ENCODE measurements at regions of chr3 and their contacts with region 1.

Region 1: DNA sequence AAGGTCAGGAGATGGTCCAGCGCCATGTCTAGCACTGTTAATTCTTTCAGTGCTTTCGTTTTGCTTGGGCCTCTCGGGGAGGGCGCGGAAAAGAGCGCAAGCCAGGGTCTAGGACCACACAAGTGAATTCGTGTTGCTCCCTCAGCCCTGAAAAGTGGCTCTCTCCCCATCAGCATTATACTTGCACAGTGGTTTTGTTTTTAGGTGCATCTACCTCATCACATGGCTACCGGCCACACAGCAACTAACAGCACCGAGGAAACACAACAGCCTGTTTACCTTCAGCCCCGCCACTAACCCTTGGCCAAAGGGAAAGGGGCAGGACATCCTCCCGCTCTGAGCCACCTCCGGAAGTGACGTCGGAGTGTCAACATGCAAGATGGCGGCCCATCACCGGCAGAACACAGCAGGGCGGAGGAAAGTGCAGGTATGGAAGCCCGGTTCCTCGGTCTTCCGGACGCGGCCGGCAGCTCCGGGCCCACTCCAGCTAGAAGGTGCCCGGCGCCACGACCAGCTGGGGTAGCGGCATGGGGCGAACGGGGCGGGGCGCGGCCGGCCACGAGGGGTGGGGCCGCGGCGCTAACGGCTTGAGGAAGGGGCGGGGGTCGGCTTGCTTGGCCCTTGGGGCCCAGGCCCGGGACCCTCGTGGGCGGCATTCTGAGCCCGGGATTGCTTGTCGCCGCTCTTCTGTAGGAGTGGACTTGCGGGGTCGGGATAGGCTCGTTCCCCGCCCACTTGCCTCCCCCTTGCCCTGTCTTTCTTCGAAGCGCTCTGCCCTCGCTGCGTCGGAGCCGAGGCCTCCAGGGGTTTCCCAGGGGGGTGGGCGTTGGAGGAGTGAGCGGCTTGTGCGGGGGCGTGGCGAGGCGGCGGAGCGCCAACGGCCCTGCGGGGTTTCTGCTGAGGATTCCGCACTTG is at the starts of genes SCN11A and WDR48:
- DNase-seq: peak; percentile 89 to 98
- ATAC-seq: peak; percentile 88 to 95 (median 90)
- H3K4me3 ChIP-seq: peak within 1 kb of the TSS; percentile 91
- H3K4me3 Mint-ChIP-seq: peak within 1 kb of the TSS; percentile 97
- H3K27ac ChIP-seq: peak within 1 kb of the TSS; percentile 93
- H3K27ac Mint-ChIP-seq: peak within 1 kb of the TSS; percentile 98 to 99
- H3K4me1 ChIP-seq: peaks cover 15% of the 10 kb centered on the region
- H3K4me1 Mint-ChIP-seq: peaks cover 23 to 39% of the 10 kb centered on the region in 2 donors
- H3K27me3 ChIP-seq: no peaks in the 10 kb centered on the region
- H3K27me3 Mint-ChIP-seq: no peaks in the 10 kb centered on the region
- CTCF ChIP-seq: no peak
- total RNA-seq, gene SCN11A: 0.07 to 0.08 TPM in 2 of 3 donors, not detected in the other
- total RNA-seq, gene WDR48: 89.1 to 101 (median 91.5) TPM

Region 2: GRCh38 chr3:39383045-39383880 is 331.4 kb after region 1 on chr3 and contains the start of gene SLC25A38:
- intact Hi-C with region 1: loop called (anchors 5 kb)
- DNase-seq: peak; percentile 74 to 92
- ATAC-seq: peak; percentile 76 to 89 (median 79)
- H3K4me3 ChIP-seq: peak within 1 kb of the TSS; percentile 94
- H3K4me3 Mint-ChIP-seq: peak within 1 kb of the TSS; percentile 98
- H3K27ac ChIP-seq: peak within 1 kb of the TSS; percentile 97
- H3K27ac Mint-ChIP-seq: peak within 1 kb of the TSS; percentile 99
- H3K4me1 ChIP-seq: peaks cover 49% of the 10 kb centered on the region
- H3K4me1 Mint-ChIP-seq: peaks cover 41 to 45% of the 10 kb centered on the region in 2 donors
- H3K27me3 ChIP-seq: no peaks in the 10 kb centered on the region
- H3K27me3 Mint-ChIP-seq: no peaks in the 10 kb centered on the region
- CTCF ChIP-seq: no peak
- total RNA-seq, gene SLC25A38: 40.0 to 44.7 (median 41.7) TPM

Region 3: DNA sequence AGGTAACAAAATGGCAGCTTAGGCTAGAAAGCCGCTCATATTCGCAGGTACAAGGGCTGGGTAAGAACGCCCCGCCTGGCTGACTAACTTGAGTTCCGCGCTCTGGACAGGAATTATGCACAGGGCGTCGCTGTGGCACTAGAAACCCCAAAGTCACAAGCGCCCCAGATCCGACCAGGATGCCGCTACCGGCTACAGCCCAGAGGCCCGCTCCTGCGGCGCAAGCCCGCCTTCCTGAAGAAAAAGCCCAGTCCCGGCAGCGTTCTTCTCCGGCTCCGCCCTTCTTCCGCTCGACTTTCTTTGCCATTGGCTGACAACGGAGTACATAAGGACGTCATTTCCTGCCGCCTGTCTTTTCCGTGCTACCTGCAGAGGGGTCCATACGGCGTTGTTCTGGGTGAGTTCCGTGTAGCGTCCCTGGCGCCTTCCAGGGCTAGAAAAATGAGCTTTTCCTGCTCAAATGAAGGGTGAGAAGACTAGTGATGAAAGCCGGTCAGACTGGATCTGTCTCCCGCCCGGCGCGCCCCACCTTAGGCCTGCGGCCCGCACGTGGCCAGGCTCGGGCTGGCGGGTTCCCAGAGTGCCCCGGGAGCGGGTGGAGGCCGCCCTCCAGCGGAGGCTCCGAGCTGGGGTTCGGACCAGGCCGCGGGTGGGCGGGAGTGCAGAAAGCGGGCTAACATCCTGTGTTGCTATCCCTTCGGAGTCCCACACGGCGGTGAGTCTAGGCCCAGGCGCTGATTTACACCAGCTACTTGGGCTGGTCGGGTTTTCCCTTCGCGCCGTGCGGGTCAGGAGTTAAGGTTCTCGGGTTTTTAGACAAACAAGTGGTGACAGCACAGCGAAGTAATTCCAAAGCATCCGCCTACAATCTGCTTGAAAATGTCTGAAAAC is 354.7 kb after region 1 on chr3 and contains the start of gene RPSA:
- intact Hi-C with region 1: loop called (anchors 5 kb)
- DNase-seq: peak; percentile 86 to 98
- ATAC-seq: peak; percentile 87 to 96 (median 91)
- H3K4me3 ChIP-seq: peak within 1 kb of the TSS; percentile 55
- H3K4me3 Mint-ChIP-seq: peak within 1 kb of the TSS; percentile 96
- H3K27ac ChIP-seq: peak within 1 kb of the TSS; percentile 71
- H3K27ac Mint-ChIP-seq: peak within 1 kb of the TSS; percentile 96 to 98
- H3K4me1 ChIP-seq: peaks cover 19% of the 10 kb centered on the region
- H3K4me1 Mint-ChIP-seq: peaks cover 40 to 43% of the 10 kb centered on the region in 2 donors
- H3K27me3 ChIP-seq: no peaks in the 10 kb centered on the region
- H3K27me3 Mint-ChIP-seq: no peaks in the 10 kb centered on the region
- CTCF ChIP-seq: peak; percentile 38
- total RNA-seq, gene RPSA: 737 to 921 (median 821) TPM